B cell (primary cell): ENCODE measurements at regions of chr13 and their contacts with region 1.

Region 1: GRCh38 chr13:24328145-24328544 is 18.8 kb downstream of the C1QTNF9 start:
- DNase-seq: no peak
- ATAC-seq: no peak
- H3K4me3 ChIP-seq: no peak overlapping the region
- H3K4me3 Mint-ChIP-seq: no peak overlapping the region
- H3K27ac ChIP-seq: no peak overlapping the region
- H3K27ac Mint-ChIP-seq: no peak overlapping the region
- H3K4me1 ChIP-seq: peaks cover 4 to 6% of the 10 kb centered on the region in 2 donors
- H3K4me1 Mint-ChIP-seq: peaks cover 6% of the 10 kb centered on the region
- H3K27me3 ChIP-seq: peaks cover 0 to 5% (median 1%) of the 10 kb centered on the region in 4 experiments
- H3K27me3 Mint-ChIP-seq: peaks cover 43% of the 10 kb centered on the region
- CTCF ChIP-seq: no peak

Region 2: GRCh38 chr13:24381539-24382265 is 53.6 kb after region 1 on chr13:
- CTCF ChIA-PET with region 1: no interaction called
- POLR2A ChIA-PET with region 1: no interaction called
- intact Hi-C with region 1: loop called (anchors 5 kb)
- DNase-seq: no peak
- ATAC-seq: no peak
- H3K4me3 ChIP-seq: no peak overlapping the region
- H3K4me3 Mint-ChIP-seq: no peak overlapping the region
- H3K27ac ChIP-seq: no peak overlapping the region
- H3K27ac Mint-ChIP-seq: no peak overlapping the region
- H3K4me1 ChIP-seq: no peaks in the 10 kb centered on the region
- H3K4me1 Mint-ChIP-seq: no peaks in the 10 kb centered on the region
- H3K27me3 ChIP-seq: no peaks in the 10 kb centered on the region
- H3K27me3 Mint-ChIP-seq: peaks cover 3% of the 10 kb centered on the region
- CTCF ChIP-seq: no peak